ENCODE measurements at regions of chr21 and their contacts with region 1.

Region 1: DNA sequence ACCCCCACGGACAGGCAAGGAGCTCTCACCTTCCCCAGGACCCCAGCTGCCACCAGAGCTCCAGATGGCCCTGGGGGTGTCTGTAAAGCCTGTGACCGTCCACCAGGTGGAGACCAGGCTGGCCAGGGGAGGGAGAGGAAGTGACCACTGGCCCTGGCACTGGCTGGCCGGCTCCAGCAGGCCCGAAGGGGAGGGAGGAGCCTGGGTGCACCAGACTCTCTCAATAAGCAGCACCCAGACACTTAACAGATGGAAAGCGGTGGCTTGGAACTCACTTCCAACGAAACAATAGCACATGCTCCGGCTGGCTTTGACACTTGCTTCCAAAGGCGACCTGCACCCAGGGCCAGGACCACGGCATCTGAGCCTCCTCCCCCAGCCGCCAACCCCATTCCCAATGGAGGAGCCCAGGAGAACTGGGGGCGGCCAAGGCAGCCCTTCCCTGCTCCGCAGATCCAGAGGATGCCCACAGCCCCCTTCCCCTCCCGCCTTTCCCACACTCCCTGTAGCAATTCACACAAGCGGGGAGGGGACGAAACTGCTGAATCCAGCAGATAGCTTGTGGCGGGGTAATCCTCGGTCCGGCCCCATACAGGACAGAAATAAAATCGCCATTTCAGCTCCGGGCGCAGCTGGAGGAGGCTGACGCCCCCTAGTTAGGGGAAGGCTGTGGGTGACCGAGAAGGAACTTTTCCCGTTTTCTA is 742 bp upstream of the PDE9A start:
- DNase-seq: peak; percentile 66 to 88 (median 84)
- ATAC-seq: peak; percentile 75 to 85
- H3K4me3 ChIP-seq: peak overlapping the region; percentile 83
- H3K27ac ChIP-seq: peak overlapping the region; percentile 18
- H3K4me1 ChIP-seq: peaks cover 6% of the 10 kb centered on the region
- H3K27me3 ChIP-seq: no peaks in the 10 kb centered on the region

Region 2: GRCh38 chr21:42746593-42747275 is 94.1 kb after region 1 on chr21:
- intact Hi-C with region 1: loop called in 1 of 4 experiments (anchors 10 kb)
- DNase-seq: peak in 2 of 3 donors; percentile 76 to 81
- ATAC-seq: peak in 1 of 2 donors; percentile 8
- H3K4me3 ChIP-seq: no peak overlapping the region
- H3K27ac ChIP-seq: no peak overlapping the region
- H3K4me1 ChIP-seq: no peaks in the 10 kb centered on the region
- H3K27me3 ChIP-seq: no peaks in the 10 kb centered on the region

Region 3: GRCh38 chr21:42892931-42893755 is 240.5 kb after region 1 on chr21 and contains the start of gene NDUFV3:
- intact Hi-C with region 1: no loop called
- DNase-seq: peak; percentile 100
- ATAC-seq: peak; percentile 99
- H3K4me3 ChIP-seq: peak within 1 kb of the TSS; percentile 44
- H3K27ac ChIP-seq: peak within 1 kb of the TSS; percentile 84
- H3K4me1 ChIP-seq: peaks cover 5% of the 10 kb centered on the region
- H3K27me3 ChIP-seq: no peaks in the 10 kb centered on the region
- total RNA-seq, gene NDUFV3: 48.0 to 52.2 (median 50.7) TPM

Measured in right cardiac atrium (tissue), 5 donors.